H1 (cell line): ENCODE measurements at regions of chr7 and their contacts with region 1.

Region 1: GRCh38 chr7:39720574-39720973 is 97.2 kb downstream of the RALA start:
- DNase-seq: no peak
- H3K4me3 ChIP-seq: no peak overlapping the region
- H3K27ac ChIP-seq: no peak overlapping the region
- H3K4me1 ChIP-seq: peaks cover 4 to 14% (median 5%) of the 10 kb centered on the region in 4 experiments; a peak in 4 of 7 replicates
- H3K27me3 ChIP-seq: no peaks in the 10 kb centered on the region
- CTCF ChIP-seq: no peak
- EP300 ChIP-seq: no peak
- POLR2A ChIP-seq: no peak
- RAD21 ChIP-seq: no peak

Region 2: DNA sequence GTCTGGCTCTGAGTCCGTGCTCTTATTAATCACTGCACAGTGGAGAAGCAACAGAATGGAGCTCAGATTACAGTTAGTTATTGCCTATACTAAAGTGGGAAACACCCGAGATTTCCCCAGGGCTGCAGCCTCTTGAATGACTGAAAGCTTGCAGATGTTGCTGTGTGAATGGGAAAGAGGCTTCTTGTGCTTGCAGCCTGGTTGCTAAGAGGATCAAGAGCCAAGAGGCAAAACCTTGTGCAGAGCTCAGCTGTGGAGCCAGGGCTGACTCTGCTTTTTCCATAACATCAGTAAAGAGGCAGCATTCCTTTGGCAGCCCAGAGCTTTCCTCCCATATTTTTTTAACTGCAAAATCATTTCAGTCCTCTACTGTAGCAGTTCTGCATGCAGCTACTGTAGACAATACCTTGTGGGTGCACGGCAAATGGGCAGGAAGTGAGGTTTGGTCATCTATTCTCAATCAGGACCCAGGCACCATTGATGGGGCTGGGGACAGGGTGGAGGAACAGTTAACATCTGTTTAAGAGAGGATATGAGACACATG is 10.7 kb before region 1 on chr7:
- CTCF ChIA-PET with region 1: interaction called, 3 read pairs
- POLR2A ChIA-PET with region 1: interaction called, 13 read pairs
- DNase-seq: no peak
- H3K4me3 ChIP-seq: no peak overlapping the region
- H3K27ac ChIP-seq: no peak overlapping the region
- H3K4me1 ChIP-seq: no peaks in the 10 kb centered on the region; a peak in 1 of 7 replicates
- H3K27me3 ChIP-seq: no peaks in the 10 kb centered on the region; a peak in 1 of 7 replicates
- CTCF ChIP-seq: no peak
- EP300 ChIP-seq: no peak
- POLR2A ChIP-seq: no peak
- RAD21 ChIP-seq: no peak

Region 3: GRCh38 chr7:39732837-39733804 is 12.5 kb after region 1 on chr7:
- CTCF ChIA-PET with region 1: interaction called, 6 read pairs
- POLR2A ChIA-PET with region 1: interaction called, 17 read pairs
- DNase-seq: peak; percentile 94 to 99
- H3K4me3 ChIP-seq: peak overlapping the region; percentile 34 to 65 (median 58)
- H3K27ac ChIP-seq: peak overlapping the region; percentile 75
- H3K4me1 ChIP-seq: peaks cover 6 to 13% (median 7%) of the 10 kb centered on the region in 4 experiments
- H3K27me3 ChIP-seq: peaks cover 0 to 15% (median 6%) of the 10 kb centered on the region in 4 experiments; a peak in 3 of 7 replicates
- CTCF ChIP-seq: no peak
- EP300 ChIP-seq: no peak
- POLR2A ChIP-seq: peak in 1 of 2 experiments; percentile 61
- RAD21 ChIP-seq: 0 out of 4 replicates have a peak, but pooled peaks of 1 of the 2 experiments have one; percentile 11